ENCODE measurements at regions of chr4 and their contacts with region 1.

Region 1: GRCh38 chr4:105558277-105558676 is 5.9 kb downstream of the ARHGEF38 start:
- DNase-seq: no peak
- H3K4me3 Mint-ChIP-seq: no peak overlapping the region
- H3K27ac Mint-ChIP-seq: peak overlapping the region; percentile 31
- H3K4me1 Mint-ChIP-seq: peaks cover 54% of the 10 kb centered on the region
- H3K27me3 Mint-ChIP-seq: no peaks in the 10 kb centered on the region
- CTCF ChIP-seq: no peak

Region 2: GRCh38 chr4:105520817-105521790 is 37.2 kb before region 1 on chr4:
- CTCF ChIA-PET with region 1: interaction called, 5 read pairs
- intact Hi-C with region 1: loop called (anchors 5 kb)
- DNase-seq: peak; percentile 55
- H3K4me3 Mint-ChIP-seq: no peak overlapping the region
- H3K27ac Mint-ChIP-seq: no peak overlapping the region
- H3K4me1 Mint-ChIP-seq: no peaks in the 10 kb centered on the region
- H3K27me3 Mint-ChIP-seq: no peaks in the 10 kb centered on the region
- CTCF ChIP-seq: peak; percentile 55

Region 3: DNA sequence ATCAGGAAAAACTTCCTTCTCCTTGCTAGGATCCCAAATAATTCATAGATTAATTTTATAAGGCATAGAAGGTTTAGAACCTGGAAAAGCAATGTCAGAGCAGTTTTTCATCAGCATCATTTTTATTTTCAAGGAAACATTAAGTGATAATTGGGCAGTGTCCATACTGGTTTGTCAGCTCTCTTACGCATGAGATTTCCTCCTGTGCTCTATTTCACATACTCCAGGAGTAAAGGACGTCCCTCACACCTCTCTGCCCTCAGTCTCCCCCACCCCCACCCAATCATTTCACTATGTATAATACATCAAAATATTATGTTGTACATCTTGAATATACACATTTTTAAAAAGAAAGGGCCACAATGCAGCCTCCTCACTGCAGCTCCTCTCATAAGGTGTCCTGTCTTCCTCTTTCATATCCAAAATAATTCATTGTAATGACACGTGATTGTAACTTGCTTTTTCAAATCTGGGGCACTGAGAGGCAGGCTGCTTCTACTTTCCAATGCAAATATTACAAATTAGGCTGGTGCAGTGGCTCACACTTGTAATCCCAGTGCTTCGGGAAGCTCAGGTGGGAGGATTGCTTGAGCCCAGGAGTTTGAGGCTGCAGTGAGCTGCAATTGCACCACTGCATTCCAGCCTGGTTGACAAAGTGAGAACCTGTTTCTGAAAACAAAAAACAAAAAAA is 28.5 kb after region 1 on chr4:
- CTCF ChIA-PET with region 1: interaction called, 3 read pairs
- intact Hi-C with region 1: loop called (anchors 2 kb)
- DNase-seq: no peak
- H3K4me3 Mint-ChIP-seq: peak overlapping the region; percentile 51
- H3K27ac Mint-ChIP-seq: peak overlapping the region; percentile 54
- H3K4me1 Mint-ChIP-seq: peaks cover 46% of the 10 kb centered on the region
- H3K27me3 Mint-ChIP-seq: no peaks in the 10 kb centered on the region
- CTCF ChIP-seq: no peak

Region 4: DNA sequence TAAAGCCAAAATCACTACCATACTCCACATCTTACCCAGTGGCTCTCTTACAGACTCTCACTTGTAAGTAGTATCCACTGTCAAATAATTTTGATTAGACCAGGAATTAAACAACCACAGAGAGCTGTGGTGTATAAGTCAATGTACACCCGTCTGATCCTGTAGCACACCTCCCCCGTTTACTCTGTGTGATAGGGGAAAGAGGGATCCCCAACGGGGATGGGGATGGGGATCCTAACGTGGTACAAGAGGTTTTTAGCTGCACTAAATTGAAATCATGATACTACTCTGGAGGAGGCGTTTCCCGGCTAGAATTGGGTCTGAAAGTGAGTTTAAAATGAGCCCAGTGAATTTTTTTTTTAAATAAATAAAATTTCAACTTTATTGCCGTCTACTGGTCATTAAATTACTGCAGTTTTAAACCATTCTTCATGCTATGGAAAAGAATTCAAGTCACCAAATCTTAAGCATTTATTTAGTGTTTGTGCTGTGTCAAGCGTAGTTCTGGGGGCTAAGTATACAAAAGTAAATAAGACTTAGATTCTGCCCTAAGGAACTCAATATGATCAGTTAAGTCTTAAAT is 73.6 kb after region 1 on chr4:
- CTCF ChIA-PET with region 1: no interaction called
- intact Hi-C with region 1: loop called (anchors 5 kb)
- DNase-seq: no peak
- H3K4me3 Mint-ChIP-seq: no peak overlapping the region
- H3K27ac Mint-ChIP-seq: no peak overlapping the region
- H3K4me1 Mint-ChIP-seq: peaks cover 38% of the 10 kb centered on the region
- H3K27me3 Mint-ChIP-seq: no peaks in the 10 kb centered on the region
- CTCF ChIP-seq: no peak